CD4-positive, alpha-beta memory T cell (primary cell): ENCODE measurements at regions of chr4 and their contacts with region 1.

Region 1: DNA sequence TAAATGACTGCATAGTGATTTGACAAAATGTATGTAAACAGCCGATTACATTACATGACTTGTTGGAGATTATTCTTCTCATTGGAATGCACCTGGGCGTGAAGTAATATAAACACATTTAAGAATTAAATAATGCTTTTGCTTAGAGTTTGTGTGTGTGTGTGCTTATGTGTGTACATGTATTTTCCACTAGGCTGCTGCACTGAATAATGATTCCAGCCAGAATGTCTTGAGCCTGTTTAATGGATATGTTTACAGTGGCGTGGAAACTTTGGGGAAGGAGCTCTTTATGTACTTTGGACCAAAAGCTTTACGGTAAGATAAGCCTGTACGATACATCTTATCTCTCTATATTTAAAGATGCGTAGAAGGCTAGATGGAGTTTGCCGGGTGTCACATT is 12.6 kb downstream of the NEIL3 start:
- DNase-seq: no peak
- H3K4me3 ChIP-seq: no peak overlapping the region
- H3K4me3 Mint-ChIP-seq: no peak overlapping the region
- H3K27ac ChIP-seq: no peak overlapping the region
- H3K27ac Mint-ChIP-seq: peak overlapping the region in 2 of 7 donors; percentile 15 to 54
- H3K4me1 ChIP-seq: peaks cover 56% of the 10 kb centered on the region
- H3K4me1 Mint-ChIP-seq: peaks cover 38 to 69% (median 57%) of the 10 kb centered on the region in 4 donors
- H3K27me3 ChIP-seq: no peaks in the 10 kb centered on the region
- H3K27me3 Mint-ChIP-seq: no peaks in the 10 kb centered on the region

Region 2: GRCh38 chr4:176319704-176320339 is 1002.4 kb before region 1 on chr4 and contains the start of gene SPCS3:
- CTCF ChIA-PET with region 1: no interaction called
- POLR2A ChIA-PET with region 1: no interaction called
- intact Hi-C with region 1: loop called (anchors 5 kb)
- DNase-seq: peak; percentile 92 to 95 (median 94)
- H3K4me3 ChIP-seq: peak within 1 kb of the TSS; percentile 40 to 59
- H3K4me3 Mint-ChIP-seq: peak within 1 kb of the TSS; percentile 93 to 98 (median 95)
- H3K27ac ChIP-seq: peak within 1 kb of the TSS; percentile 95
- H3K27ac Mint-ChIP-seq: peak within 1 kb of the TSS; percentile 95 to 98 (median 96)
- H3K4me1 ChIP-seq: peaks cover 49% of the 10 kb centered on the region
- H3K4me1 Mint-ChIP-seq: peaks cover 29 to 60% (median 40%) of the 10 kb centered on the region in 4 donors
- H3K27me3 ChIP-seq: no peaks in the 10 kb centered on the region
- H3K27me3 Mint-ChIP-seq: no peaks in the 10 kb centered on the region
- total RNA-seq, gene SPCS3: 193 to 207 TPM